CD4-positive, alpha-beta T cell (primary cell): ENCODE measurements at regions of chr9 and their contacts with region 1.

Region 1: DNA sequence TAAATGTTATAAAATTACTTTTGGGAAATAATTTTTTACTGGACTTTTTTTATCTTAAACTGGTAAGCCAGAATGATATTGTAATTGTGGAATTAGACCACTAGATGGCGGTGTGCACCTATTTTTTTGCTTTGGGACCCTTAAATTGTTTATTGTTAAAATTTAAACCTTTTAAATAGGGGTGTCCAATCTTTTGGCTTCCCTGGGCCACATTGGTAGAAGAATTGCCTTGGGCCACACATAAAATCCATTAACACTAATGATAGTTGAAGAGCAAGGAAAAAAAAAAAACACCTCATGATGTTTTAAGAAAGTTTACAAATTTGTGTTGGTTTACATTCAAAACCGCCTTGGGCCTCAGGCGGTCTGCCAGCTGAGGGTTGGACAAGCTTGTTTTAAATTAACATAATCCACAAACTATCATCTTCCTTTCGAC is 28.4 kb upstream of the GADD45G start:
- DNase-seq: peak in 4 of 14 experiments; percentile 47 to 70 (median 54)
- ATAC-seq: no peak
- H3K4me3 ChIP-seq: no peak overlapping the region
- H3K4me3 Mint-ChIP-seq: no peak overlapping the region
- H3K27ac ChIP-seq: no peak overlapping the region
- H3K27ac Mint-ChIP-seq: no peak overlapping the region
- H3K4me1 ChIP-seq: peaks cover 11% of the 10 kb centered on the region
- H3K4me1 Mint-ChIP-seq: peaks cover 13% of the 10 kb centered on the region
- H3K27me3 ChIP-seq: peaks cover 12 to 13% of the 10 kb centered on the region in 2 experiments
- H3K27me3 Mint-ChIP-seq: peaks cover 54% of the 10 kb centered on the region
- CTCF ChIP-seq: peak; percentile 90

Region 2: DNA sequence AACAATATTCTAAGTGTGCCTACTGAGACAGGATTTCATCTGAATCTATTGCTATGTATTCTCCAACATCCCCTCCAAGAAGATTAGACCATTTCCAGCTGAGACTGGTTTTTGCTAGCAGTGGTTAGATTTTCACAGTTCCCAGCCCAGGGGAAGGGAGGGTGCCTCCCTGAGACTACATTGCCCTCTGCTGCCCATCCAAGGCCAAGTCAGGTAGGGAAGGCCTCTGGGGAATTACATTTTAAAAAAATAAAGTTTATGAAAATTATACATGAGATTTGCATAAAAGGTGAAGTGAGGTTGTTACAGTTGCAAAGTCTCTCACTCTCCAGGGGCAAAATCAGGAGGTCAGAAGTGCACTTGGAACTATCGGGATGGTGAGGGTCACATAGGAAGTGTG is 1197.2 kb after region 1 on chr9:
- CTCF ChIA-PET with region 1: no interaction called
- POLR2A ChIA-PET with region 1: no interaction called
- intact Hi-C with region 1: loop called in 1 of 2 experiments (anchors 10 kb)
- DNase-seq: peak in 1 of 14 experiments; percentile 10
- ATAC-seq: no peak
- H3K4me3 ChIP-seq: no peak overlapping the region
- H3K4me3 Mint-ChIP-seq: no peak overlapping the region
- H3K27ac ChIP-seq: no peak overlapping the region
- H3K27ac Mint-ChIP-seq: no peak overlapping the region
- H3K4me1 ChIP-seq: no peaks in the 10 kb centered on the region
- H3K4me1 Mint-ChIP-seq: no peaks in the 10 kb centered on the region
- H3K27me3 ChIP-seq: no peaks in the 10 kb centered on the region
- H3K27me3 Mint-ChIP-seq: peaks cover 17% of the 10 kb centered on the region
- CTCF ChIP-seq: no peak